CD4-positive, alpha-beta T cell (primary cell): ENCODE measurements at regions of chr12 and their contacts with region 1.

Region 1: DNA sequence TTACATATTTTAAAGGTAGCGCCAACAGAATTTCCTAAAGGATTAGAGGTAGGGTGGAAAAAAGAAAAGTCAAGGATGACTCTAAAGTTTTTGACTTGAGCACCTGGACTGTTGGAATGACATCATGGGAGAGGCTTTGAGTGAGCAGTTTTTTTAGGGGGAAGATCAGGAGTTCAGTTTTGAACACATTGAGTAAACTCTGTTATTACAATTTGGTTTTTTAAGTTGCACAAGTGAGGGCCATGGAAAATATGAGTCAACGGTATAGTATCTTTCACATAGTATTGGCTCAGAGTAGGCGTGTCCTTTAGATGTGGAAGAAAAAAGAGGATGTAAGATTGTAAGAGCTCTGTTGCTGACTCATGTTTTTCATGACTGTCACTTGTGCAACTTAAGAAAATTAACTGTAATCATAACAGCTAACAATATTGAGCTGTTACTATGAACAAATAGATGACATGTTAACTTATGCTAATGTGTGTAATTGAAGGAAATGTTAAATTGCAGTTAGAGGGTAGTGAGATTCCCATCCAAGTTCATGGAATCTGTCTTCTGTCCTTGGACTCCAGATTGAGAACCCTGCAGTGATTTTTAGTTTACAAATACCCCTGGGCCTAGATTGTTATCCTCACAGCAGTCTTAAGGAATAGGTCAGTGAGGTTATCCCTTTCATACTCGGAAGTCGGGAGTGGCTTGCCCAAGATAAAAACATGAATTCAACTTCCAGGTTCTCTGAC is 48.1 kb upstream of the ATP2B1 start:
- DNase-seq: peak in 4 of 14 experiments; percentile 11 to 82 (median 76)
- ATAC-seq: peak; percentile 81
- H3K4me3 ChIP-seq: no peak overlapping the region
- H3K4me3 Mint-ChIP-seq: peak overlapping the region; percentile 31
- H3K27ac ChIP-seq: peak overlapping the region in 1 of 2 donors; percentile 31
- H3K27ac Mint-ChIP-seq: peak overlapping the region; percentile 69
- H3K4me1 ChIP-seq: peaks cover 8% of the 10 kb centered on the region
- H3K4me1 Mint-ChIP-seq: peaks cover 53% of the 10 kb centered on the region
- H3K27me3 ChIP-seq: no peaks in the 10 kb centered on the region
- H3K27me3 Mint-ChIP-seq: no peaks in the 10 kb centered on the region
- CTCF ChIP-seq: no peak

Region 2: GRCh38 chr12:89117448-89118034 is 639.2 kb before region 1 on chr12:
- CTCF ChIA-PET with region 1: no interaction called
- POLR2A ChIA-PET with region 1: no interaction called
- intact Hi-C with region 1: no loop called
- DNase-seq: no peak
- ATAC-seq: no peak
- H3K4me3 ChIP-seq: no peak overlapping the region
- H3K4me3 Mint-ChIP-seq: no peak overlapping the region
- H3K27ac ChIP-seq: no peak overlapping the region
- H3K27ac Mint-ChIP-seq: no peak overlapping the region
- H3K4me1 ChIP-seq: no peaks in the 10 kb centered on the region
- H3K4me1 Mint-ChIP-seq: no peaks in the 10 kb centered on the region
- H3K27me3 ChIP-seq: no peaks in the 10 kb centered on the region
- H3K27me3 Mint-ChIP-seq: no peaks in the 10 kb centered on the region
- CTCF ChIP-seq: no peak

Region 3: GRCh38 chr12:89717759-89718523 is 38.8 kb before region 1 on chr12:
- CTCF ChIA-PET with region 1: no interaction called
- POLR2A ChIA-PET with region 1: no interaction called
- intact Hi-C with region 1: loop called in 1 of 2 experiments (anchors 5 kb)
- DNase-seq: no peak
- ATAC-seq: no peak
- H3K4me3 ChIP-seq: no peak overlapping the region
- H3K4me3 Mint-ChIP-seq: no peak overlapping the region
- H3K27ac ChIP-seq: no peak overlapping the region
- H3K27ac Mint-ChIP-seq: no peak overlapping the region
- H3K4me1 ChIP-seq: no peaks in the 10 kb centered on the region
- H3K4me1 Mint-ChIP-seq: no peaks in the 10 kb centered on the region
- H3K27me3 ChIP-seq: no peaks in the 10 kb centered on the region
- H3K27me3 Mint-ChIP-seq: no peaks in the 10 kb centered on the region
- CTCF ChIP-seq: no peak